ENCODE measurements at regions of chr15 and their contacts with region 1.

Region 1: GRCh38 chr15:26996250-26996649 is 25.3 kb downstream of the GABRG3 start:
- DNase-seq: no peak
- H3K4me3 ChIP-seq: no peak overlapping the region
- CTCF ChIP-seq: no peak
- POLR2A ChIP-seq: no peak

Region 2: DNA sequence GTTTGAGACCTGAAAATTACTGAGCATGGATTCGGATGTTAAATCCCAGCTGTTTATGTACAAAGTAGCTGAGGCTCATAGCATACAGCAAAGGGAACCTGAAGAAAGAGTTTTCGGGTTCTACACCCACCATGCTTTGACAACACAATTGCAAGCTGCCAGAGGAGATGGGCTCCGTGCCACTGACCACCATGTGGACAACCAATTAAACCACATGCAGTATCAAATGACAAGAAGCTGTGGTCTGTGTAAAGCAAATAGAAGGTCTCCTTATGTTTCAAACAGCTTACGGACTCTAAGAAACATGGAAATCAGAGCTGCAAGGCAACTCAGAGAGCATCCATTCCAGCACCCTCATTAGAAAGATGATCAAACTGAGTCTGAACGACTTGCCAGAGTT is 236.3 kb before region 1 on chr15:
- intact Hi-C with region 1: no loop called
- DNase-seq: no peak
- H3K4me3 ChIP-seq: no peak overlapping the region
- CTCF ChIP-seq: no peak
- POLR2A ChIP-seq: no peak

Region 3: DNA sequence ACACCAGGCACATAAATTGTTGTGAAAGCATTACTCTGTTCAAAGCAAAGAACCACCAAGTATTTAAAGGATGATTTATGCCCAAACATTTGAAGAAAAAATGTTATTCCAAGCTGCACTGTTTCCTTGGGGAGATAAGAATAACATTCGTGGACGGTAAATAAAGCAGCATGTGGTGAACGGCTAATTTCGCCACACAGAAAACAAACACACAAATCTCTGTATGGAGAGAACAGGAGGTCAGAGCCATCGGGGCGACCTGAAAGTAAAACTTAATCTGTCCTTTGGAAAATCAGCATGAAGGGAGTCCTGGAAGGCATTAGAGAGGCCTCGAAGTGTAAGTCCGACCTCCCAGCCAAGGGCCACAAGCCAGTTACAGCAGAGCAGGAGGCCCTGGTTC is 52.4 kb before region 1 on chr15:
- intact Hi-C with region 1: loop called (anchors 10 kb)
- DNase-seq: no peak
- H3K4me3 ChIP-seq: no peak overlapping the region
- CTCF ChIP-seq: no peak
- POLR2A ChIP-seq: no peak

Measured in lower leg skin (tissue), 4 donors.